Activated CD8-positive, alpha-beta T cell treated with anti-CD3 and anti-CD28 coated beads, Interleukin-2, amount 10 ng/mL, durations not matched to agents 7 days and 5 days (primary cell): ENCODE measurements at regions of chr13 and their contacts with region 1.

Region 1: DNA sequence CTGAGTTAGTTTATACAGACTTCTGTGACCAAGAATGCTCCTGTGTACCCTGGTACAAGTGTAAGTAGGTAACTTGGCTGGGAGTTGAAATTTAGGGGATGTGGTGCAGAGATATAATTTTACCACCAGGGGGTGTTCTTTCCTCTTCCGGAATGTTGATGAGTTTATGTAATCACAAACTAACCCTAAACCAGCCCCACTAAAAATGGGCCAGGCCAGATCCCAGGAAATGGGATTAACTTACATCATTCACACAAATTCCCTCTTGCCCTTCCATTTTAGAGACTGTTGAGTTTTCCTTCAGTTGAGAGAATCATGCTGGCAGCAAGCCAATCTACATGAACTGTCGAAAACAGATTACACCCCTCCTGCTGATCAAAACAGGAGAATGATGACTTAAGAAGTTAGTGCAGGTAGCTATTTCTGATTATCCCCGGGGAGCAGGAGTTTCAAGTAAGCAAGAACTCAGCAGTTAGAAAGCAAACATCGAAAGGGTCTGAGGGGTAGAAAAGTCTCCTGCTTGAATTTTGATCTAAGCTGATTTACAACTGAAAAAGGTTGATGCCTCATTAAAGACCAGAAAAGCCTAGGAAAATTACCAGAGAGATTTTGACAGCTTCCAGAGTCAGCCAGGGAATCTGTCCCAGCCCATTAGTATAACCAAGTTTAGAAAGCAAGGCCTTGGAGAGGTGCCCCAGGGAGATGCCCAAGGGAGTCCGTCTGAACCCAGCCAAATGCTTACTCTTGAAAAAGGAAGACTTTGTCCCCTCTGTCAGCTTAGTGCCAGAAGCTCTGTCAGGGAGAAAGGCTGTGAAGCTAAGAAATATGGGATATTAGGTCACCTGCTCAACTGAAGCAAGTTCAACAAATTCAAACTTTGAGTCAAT is 32.3 kb upstream of the MED4 start:
- DNase-seq: peak; percentile 46
- ATAC-seq: peak; percentile 89
- H3K4me3 Mint-ChIP-seq: no peak overlapping the region
- H3K27ac Mint-ChIP-seq: peak overlapping the region; percentile 50
- H3K4me1 Mint-ChIP-seq: peaks cover 15% of the 10 kb centered on the region
- H3K27me3 Mint-ChIP-seq: no peaks in the 10 kb centered on the region

Region 2: DNA sequence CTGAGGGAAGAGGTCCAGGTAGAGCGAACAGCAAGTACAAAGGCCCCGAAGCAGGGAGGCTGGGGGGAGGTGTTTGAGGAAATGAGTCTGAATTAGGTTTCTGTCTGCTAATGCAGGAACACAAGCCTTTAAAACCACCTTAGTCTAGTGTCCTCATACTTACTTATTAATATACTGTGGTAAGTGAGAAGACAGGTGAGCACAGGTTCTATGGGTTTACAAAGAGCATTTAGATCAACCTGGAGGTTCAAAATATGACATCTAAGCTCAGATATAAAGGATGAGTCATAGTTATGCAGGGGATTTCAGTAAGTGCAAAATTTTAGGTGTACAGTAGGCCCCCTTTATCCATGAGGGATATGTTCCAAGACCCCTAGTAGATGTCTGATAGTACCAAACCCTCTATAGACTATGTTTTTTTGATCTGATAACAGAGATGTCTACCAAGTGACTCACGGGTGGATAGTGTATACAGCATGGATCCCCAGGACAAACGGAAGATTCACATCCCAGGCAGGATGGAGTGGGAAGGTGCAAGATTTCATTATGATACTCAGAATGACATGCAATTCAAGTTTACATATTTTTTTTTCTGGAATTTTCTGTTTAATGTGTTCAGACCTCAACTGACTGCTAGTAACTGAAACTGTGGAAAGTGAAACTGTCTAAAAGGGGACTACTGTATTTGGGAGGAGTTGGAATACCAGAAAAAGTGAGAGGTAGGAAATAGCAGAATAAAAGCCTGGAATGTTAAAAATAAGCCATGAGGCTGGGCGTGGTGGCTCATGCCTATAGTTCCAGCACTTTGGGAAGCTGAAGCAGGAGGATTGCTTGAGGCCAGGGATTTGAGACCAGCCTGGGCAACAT is 14.1 kb before region 1 on chr13:
- CTCF ChIA-PET with region 1: interaction called, 10 read pairs
- POLR2A ChIA-PET with region 1: no interaction called
- DNase-seq: no peak
- ATAC-seq: no peak
- H3K4me3 Mint-ChIP-seq: no peak overlapping the region
- H3K27ac Mint-ChIP-seq: no peak overlapping the region
- H3K4me1 Mint-ChIP-seq: peaks cover 2% of the 10 kb centered on the region
- H3K27me3 Mint-ChIP-seq: peaks cover 28% of the 10 kb centered on the region

Region 3: DNA sequence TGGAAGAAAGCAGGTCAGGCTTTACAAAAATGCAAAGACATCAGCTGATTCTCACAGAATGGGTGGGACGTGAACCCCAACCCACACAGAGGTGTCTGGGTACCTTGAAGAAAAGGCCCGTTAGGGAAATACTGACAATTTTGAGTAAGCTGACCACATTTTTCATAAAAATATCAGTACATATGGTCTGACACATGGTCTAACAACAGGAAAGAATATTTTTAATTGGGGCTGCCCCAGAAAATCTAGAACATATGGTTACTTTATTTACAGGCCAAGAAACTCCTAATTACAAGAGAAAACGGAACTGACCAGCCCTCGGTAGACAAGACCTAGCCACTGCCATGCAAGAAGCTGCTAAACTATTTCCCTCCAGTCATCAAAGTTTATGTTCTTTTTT is 57.1 kb after region 1 on chr13:
- CTCF ChIA-PET with region 1: interaction called, 15 read pairs
- POLR2A ChIA-PET with region 1: no interaction called
- DNase-seq: no peak
- ATAC-seq: no peak
- H3K4me3 Mint-ChIP-seq: no peak overlapping the region
- H3K27ac Mint-ChIP-seq: peak overlapping the region; percentile 40
- H3K4me1 Mint-ChIP-seq: peaks cover 60% of the 10 kb centered on the region
- H3K27me3 Mint-ChIP-seq: no peaks in the 10 kb centered on the region

Region 4: DNA sequence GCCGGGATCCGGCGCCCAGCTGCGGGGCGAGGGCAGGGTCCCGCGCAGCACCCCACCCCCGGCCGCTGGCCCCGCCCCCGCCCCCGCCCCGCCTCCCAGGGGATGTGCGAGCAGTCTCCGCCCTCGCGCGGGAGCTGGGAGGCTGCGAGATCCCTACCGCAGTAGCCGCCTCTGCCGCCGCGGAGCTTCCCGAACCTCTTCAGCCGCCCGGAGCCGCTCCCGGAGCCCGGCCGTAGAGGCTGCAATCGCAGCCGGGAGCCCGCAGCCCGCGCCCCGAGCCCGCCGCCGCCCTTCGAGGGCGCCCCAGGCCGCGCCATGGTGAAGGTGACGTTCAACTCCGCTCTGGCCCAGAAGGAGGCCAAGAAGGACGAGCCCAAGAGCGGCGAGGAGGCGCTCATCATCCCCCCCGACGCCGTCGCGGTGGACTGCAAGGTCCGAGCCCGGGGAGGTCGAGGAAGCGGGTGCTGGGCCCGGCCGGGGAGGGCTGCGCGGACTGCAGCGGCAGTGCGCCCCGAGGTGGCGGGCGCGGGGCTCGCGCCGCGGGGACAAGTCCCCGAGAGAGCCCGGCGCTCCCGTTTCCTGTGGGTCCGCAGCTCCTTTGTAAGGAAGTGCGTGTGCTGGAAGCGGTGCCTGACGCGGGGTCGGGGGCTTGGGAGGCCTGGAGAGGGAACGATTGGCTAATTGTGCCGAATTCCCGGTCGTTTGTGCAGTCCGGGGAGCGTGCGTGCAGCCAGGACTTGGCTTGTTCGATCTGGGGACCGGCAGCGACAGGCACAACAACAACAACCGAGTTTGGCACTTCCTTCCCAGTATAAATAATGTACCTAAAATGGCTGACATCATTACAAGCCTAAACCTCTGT is 106.1 kb after region 1 on chr13 and contains the start of gene ITM2B:
- CTCF ChIA-PET with region 1: interaction called, 53 read pairs
- POLR2A ChIA-PET with region 1: interaction called, 16 read pairs
- DNase-seq: peak; percentile 70
- ATAC-seq: peak; percentile 81
- H3K4me3 Mint-ChIP-seq: peak within 1 kb of the TSS; percentile 94
- H3K27ac Mint-ChIP-seq: peak within 1 kb of the TSS; percentile 89
- H3K4me1 Mint-ChIP-seq: peaks cover 46% of the 10 kb centered on the region
- H3K27me3 Mint-ChIP-seq: no peaks in the 10 kb centered on the region
- total RNA-seq, gene ITM2B: 243 to 244 TPM

Region 5: DNA sequence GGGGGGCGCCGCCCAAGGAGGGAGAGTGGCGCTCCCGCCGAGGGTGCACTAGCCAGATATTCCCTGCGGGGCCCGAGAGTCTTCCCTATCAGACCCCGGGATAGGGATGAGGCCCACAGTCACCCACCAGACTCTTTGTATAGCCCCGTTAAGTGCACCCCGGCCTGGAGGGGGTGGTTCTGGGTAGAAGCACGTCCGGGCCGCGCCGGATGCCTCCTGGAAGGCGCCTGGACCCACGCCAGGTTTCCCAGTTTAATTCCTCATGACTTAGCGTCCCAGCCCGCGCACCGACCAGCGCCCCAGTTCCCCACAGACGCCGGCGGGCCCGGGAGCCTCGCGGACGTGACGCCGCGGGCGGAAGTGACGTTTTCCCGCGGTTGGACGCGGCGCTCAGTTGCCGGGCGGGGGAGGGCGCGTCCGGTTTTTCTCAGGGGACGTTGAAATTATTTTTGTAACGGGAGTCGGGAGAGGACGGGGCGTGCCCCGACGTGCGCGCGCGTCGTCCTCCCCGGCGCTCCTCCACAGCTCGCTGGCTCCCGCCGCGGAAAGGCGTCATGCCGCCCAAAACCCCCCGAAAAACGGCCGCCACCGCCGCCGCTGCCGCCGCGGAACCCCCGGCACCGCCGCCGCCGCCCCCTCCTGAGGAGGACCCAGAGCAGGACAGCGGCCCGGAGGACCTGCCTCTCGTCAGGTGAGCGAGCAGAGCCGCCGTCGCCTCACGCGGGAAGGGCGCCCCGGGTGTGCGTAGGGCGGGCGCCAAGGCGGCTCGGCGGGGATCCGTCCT is 176.4 kb after region 1 on chr13 and contains the start of gene RB1:
- CTCF ChIA-PET with region 1: interaction called, 12 read pairs
- POLR2A ChIA-PET with region 1: interaction called, 10 read pairs
- DNase-seq: peak; percentile 94
- ATAC-seq: peak; percentile 85
- H3K4me3 Mint-ChIP-seq: peak within 1 kb of the TSS; percentile 94
- H3K27ac Mint-ChIP-seq: peak within 1 kb of the TSS; percentile 98
- H3K4me1 Mint-ChIP-seq: peaks cover 29% of the 10 kb centered on the region
- H3K27me3 Mint-ChIP-seq: no peaks in the 10 kb centered on the region
- total RNA-seq, gene RB1: 61.7 to 64.6 TPM